ENCODE measurements at regions of chr12 and their contacts with region 1.

Region 1: DNA sequence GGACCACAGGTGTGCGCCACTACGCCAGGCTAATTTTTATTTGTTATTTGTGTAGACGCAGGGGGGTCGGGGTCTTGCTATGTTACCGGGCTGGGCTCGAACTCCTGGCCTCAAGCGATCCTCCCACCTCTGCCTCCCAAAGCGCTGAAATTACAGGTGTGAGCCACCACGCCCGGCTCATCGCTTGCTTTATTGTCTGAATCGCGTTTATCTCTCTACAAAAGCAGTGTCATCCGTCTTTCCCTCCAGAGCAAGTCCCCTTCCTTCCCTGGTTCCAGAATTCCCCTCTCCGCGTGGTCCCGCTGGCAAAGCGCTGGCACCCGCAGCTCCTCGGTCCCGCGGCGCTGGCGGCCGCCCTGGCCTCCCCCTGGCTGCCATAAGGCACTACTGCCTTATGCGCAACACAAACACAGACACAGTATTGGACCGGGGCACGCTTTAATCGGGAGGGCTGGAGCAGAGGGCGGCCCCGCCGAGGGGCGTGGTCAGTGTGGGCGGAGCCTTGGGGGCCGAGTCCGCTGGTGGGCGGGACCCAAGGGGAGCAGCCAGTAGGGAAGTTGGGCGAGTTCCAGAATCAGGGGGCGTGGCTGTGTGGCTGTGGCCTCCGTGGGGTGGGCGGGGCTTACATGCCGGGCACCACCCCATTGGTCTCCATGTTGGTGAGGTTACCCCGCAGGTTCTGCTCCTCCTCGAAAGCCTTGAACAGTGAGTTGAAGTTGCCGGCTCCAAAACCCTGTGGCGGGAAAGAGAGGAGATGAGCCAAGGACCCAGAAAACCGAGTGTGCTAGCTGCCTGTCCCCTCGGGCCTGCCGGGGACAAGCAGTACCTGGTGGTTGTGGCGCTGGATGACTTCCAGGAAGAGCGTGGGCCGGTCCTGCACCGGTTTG is 19.3 kb downstream of the HPD start:
- DNase-seq: peak; percentile 98 to 100 (median 99)
- ATAC-seq: peak; percentile 100
- H3K4me3 ChIP-seq: peak overlapping the region; percentile 91
- H3K4me3 Mint-ChIP-seq: peak overlapping the region; percentile 96 to 100 (median 98)
- H3K27ac ChIP-seq: peak overlapping the region; percentile 58
- H3K27ac Mint-ChIP-seq: peak overlapping the region; percentile 87 to 96 (median 92)
- H3K4me1 ChIP-seq: peaks cover 8 to 13% of the 10 kb centered on the region in 2 donors
- H3K4me1 Mint-ChIP-seq: peaks cover 12 to 27% (median 18%) of the 10 kb centered on the region in 7 donors
- H3K27me3 ChIP-seq: no peaks in the 10 kb centered on the region
- H3K27me3 Mint-ChIP-seq: no peaks in the 10 kb centered on the region

Region 2: DNA sequence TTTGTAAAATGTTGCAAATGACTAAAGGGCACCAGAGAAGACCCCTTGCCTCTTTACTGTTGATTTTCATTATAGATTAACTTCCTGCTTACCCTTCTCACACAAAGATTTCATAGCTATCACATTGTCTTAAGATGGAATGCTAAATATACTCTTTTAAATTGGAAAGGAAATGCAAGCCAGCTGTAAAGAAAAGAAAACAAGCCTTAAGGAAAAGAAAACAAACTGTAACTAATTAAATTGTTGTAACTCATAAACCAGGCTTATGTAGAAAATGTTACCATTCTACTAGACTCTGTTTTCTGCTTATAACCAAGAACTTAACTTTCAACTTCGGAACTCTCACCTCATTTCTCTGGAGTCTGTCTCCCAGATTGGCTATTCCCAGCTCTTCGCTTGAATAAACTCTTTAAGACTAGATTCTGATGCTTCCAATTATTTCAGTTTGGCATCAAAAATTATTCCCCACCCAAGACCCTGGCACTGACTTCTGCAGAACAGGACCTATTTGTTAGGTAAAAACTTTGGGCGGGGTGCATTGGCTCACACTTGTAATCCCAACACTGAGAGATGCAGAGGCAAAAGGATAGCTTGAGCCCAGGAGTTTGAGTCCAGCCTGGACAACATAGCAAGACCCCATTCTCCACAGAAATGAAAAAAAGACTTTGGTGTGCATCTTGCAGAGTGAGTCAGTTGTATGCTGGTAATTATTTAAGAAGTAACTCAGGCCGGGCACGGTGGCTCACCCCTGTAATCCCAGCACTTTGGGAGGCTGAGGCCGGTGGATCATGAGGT is 1925.6 kb before region 1 on chr12:
- CTCF ChIA-PET with region 1: no interaction called
- POLR2A ChIA-PET with region 1: no interaction called
- intact Hi-C with region 1: no loop called
- DNase-seq: no peak
- ATAC-seq: no peak
- H3K4me3 ChIP-seq: no peak overlapping the region
- H3K4me3 Mint-ChIP-seq: no peak overlapping the region
- H3K27ac ChIP-seq: no peak overlapping the region
- H3K27ac Mint-ChIP-seq: no peak overlapping the region
- H3K4me1 ChIP-seq: no peaks in the 10 kb centered on the region
- H3K4me1 Mint-ChIP-seq: no peaks in the 10 kb centered on the region
- H3K27me3 ChIP-seq: no peaks in the 10 kb centered on the region
- H3K27me3 Mint-ChIP-seq: peaks cover 0 to 13% (median 0%) of the 10 kb centered on the region in 5 donors

Region 3: DNA sequence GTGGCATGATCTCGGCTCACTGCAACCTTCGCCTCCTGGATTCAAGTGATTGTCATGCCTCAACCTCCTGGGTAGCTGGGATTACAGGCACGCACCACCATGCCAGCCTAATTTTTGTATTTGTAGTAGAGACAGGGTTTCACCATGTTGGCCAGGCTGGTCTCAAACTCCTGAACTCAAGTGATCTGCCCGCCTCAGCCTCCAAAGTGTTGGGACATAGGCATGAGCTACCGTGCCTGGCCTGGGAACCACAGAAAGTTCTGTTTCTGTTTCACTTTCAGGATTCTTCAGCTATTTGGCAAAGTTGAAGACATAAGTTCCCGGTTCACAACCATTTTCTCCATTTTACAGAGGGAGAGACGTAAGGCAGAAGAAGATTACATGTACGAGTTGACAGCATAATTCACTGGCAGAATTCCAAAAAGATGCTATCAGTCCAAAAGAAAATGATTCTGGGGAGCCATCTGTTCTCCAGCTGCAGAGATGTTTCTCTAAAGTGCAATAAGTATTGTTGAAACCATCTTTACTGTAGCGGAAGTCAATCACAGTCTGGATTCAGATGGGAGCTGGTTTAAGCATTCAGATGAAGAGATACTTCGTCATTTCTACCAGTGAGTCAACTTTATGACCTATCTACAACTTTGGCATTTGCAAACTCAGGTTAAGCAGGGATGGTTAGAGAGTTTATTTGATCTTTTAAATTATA is 447.6 kb before region 1 on chr12:
- CTCF ChIA-PET with region 1: no interaction called
- POLR2A ChIA-PET with region 1: no interaction called
- intact Hi-C with region 1: no loop called
- DNase-seq: peak in 4 of 9 donors; percentile 12 to 31 (median 16)
- ATAC-seq: peak; percentile 57
- H3K4me3 ChIP-seq: no peak overlapping the region
- H3K4me3 Mint-ChIP-seq: peak overlapping the region; percentile 8 to 78 (median 64)
- H3K27ac ChIP-seq: peak overlapping the region; percentile 3
- H3K27ac Mint-ChIP-seq: peak overlapping the region in 7 of 9 donors; percentile 30 to 79 (median 60)
- H3K4me1 ChIP-seq: peaks cover 0 to 7% of the 10 kb centered on the region in 2 donors
- H3K4me1 Mint-ChIP-seq: peaks cover 0 to 17% (median 9%) of the 10 kb centered on the region in 7 donors
- H3K27me3 ChIP-seq: no peaks in the 10 kb centered on the region
- H3K27me3 Mint-ChIP-seq: no peaks in the 10 kb centered on the region

Region 4: GRCh38 chr12:121688966-121689365 is 150.4 kb before region 1 on chr12:
- CTCF ChIA-PET with region 1: no interaction called
- POLR2A ChIA-PET with region 1: no interaction called
- intact Hi-C with region 1: loop called in 1 of 2 experiments (anchors 1 kb)
- DNase-seq: no peak
- ATAC-seq: no peak
- H3K4me3 ChIP-seq: no peak overlapping the region
- H3K4me3 Mint-ChIP-seq: no peak overlapping the region
- H3K27ac ChIP-seq: no peak overlapping the region
- H3K27ac Mint-ChIP-seq: peak overlapping the region in 6 of 9 donors; percentile 8 to 36 (median 22)
- H3K4me1 ChIP-seq: peaks cover 0 to 4% of the 10 kb centered on the region in 2 donors
- H3K4me1 Mint-ChIP-seq: peaks cover 0 to 16% (median 10%) of the 10 kb centered on the region in 7 donors
- H3K27me3 ChIP-seq: no peaks in the 10 kb centered on the region
- H3K27me3 Mint-ChIP-seq: peaks cover 0 to 6% (median 0%) of the 10 kb centered on the region in 5 donors

Region 5: DNA sequence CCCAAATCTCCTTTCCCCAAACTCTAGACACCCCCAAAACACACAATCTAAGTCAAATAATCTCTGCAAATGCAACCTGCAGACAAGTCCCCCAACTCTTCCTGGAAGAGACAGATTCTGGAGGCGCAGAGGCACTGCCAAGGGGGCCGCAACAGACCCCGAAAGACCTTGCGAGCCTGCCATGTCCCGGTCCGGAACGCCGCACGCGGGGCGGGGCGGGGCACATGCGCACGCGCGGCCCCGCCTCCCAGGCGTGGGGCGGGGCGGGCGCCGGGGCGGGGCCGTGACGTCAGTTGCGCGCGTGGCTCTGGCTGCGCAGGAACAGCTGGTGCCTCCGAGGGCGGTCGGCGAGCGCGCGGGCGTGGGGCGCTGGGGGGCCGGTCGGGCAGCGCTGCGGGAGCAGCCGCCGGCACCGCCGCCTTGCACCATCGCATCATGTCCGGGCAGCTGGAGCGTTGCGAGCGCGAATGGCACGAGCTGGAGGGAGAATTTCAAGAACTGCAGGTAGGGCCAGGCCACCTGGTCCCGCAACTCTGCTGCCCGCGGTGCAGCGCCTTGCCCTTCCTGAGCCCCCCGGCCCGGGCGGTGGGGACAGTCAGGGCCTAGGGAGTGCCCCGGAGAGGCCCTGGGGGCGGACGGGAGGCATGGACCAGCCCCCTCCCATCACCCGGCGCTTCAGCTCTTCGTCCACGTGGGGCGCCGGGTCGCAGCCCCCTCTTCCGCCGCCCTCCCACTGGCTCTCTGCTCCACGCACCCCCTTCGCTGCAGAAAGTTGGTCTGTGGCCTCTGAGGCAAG is 126.7 kb before region 1 on chr12 and contains the start of gene TMEM120B:
- CTCF ChIA-PET with region 1: no interaction called
- POLR2A ChIA-PET with region 1: interaction called, 9 read pairs
- intact Hi-C with region 1: loop called (anchors 1 kb)
- DNase-seq: peak; percentile 75 to 91 (median 86)
- ATAC-seq: peak; percentile 97
- H3K4me3 ChIP-seq: peak within 1 kb of the TSS; percentile 99
- H3K4me3 Mint-ChIP-seq: peak within 1 kb of the TSS; percentile 84 to 97 (median 94)
- H3K27ac ChIP-seq: peak within 1 kb of the TSS; percentile 82
- H3K27ac Mint-ChIP-seq: peak within 1 kb of the TSS; percentile 86 to 96 (median 92)
- H3K4me1 ChIP-seq: peaks cover 11 to 12% of the 10 kb centered on the region in 2 donors
- H3K4me1 Mint-ChIP-seq: peaks cover 7 to 37% (median 26%) of the 10 kb centered on the region in 7 donors
- H3K27me3 ChIP-seq: no peaks in the 10 kb centered on the region
- H3K27me3 Mint-ChIP-seq: no peaks in the 10 kb centered on the region
- total RNA-seq, gene TMEM120B: 7.3 to 14.3 (median 9.2) TPM

Region 6: GRCh38 chr12:121811434-121812319 is 27.7 kb before region 1 on chr12:
- CTCF ChIA-PET with region 1: interaction called, 4 read pairs
- POLR2A ChIA-PET with region 1: interaction called, 3 read pairs
- intact Hi-C with region 1: loop called in 1 of 2 experiments (anchors 2 kb)
- DNase-seq: peak in 8 of 9 donors; percentile 55 to 86 (median 75)
- ATAC-seq: peak; percentile 92
- H3K4me3 ChIP-seq: peak overlapping the region; percentile 74
- H3K4me3 Mint-ChIP-seq: peak overlapping the region; percentile 75 to 92 (median 84)
- H3K27ac ChIP-seq: peak overlapping the region; percentile 63
- H3K27ac Mint-ChIP-seq: peak overlapping the region; percentile 23 to 92 (median 75)
- H3K4me1 ChIP-seq: peaks cover 38 to 48% of the 10 kb centered on the region in 2 donors
- H3K4me1 Mint-ChIP-seq: peaks cover 29 to 69% (median 47%) of the 10 kb centered on the region in 7 donors
- H3K27me3 ChIP-seq: no peaks in the 10 kb centered on the region
- H3K27me3 Mint-ChIP-seq: no peaks in the 10 kb centered on the region

Region 7: GRCh38 chr12:121917979-121918678 is 78.8 kb after region 1 on chr12 and contains the start of gene CFAP251:
- CTCF ChIA-PET with region 1: no interaction called
- POLR2A ChIA-PET with region 1: no interaction called
- intact Hi-C with region 1: loop called (anchors 1 kb)
- DNase-seq: peak; percentile 88 to 98 (median 94)
- ATAC-seq: peak; percentile 99
- H3K4me3 ChIP-seq: peak within 1 kb of the TSS; percentile 58
- H3K4me3 Mint-ChIP-seq: peak within 1 kb of the TSS; percentile 68 to 94 (median 86)
- H3K27ac ChIP-seq: peak within 1 kb of the TSS; percentile 71
- H3K27ac Mint-ChIP-seq: peak within 1 kb of the TSS; percentile 91 to 98 (median 93)
- H3K4me1 ChIP-seq: peaks cover 4 to 10% of the 10 kb centered on the region in 2 donors
- H3K4me1 Mint-ChIP-seq: peaks cover 8 to 19% (median 13%) of the 10 kb centered on the region in 7 donors
- H3K27me3 ChIP-seq: no peaks in the 10 kb centered on the region
- H3K27me3 Mint-ChIP-seq: no peaks in the 10 kb centered on the region
- total RNA-seq, gene CFAP251: 0.38 to 1.5 (median 0.88) TPM

Region 8: DNA sequence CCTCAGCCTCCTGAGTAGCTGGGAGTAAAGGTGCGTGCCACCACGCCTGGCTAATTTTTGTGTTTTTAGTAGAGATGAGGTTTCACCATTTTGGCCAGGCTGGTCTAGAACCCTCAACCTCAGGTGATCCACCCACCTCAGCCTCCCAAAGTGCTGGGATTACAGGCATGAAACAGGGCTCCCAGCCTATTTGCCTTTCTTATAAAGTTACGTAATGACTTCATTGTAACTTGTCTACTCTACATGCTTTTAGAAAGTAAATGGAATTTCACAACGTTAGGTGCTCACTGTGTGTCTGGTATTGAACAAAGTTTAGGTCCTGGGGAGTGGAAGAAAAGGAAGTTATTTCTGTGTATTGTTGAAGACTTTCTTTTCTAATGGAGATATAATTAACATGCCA is 91.5 kb after region 1 on chr12:
- CTCF ChIA-PET with region 1: no interaction called
- POLR2A ChIA-PET with region 1: no interaction called
- intact Hi-C with region 1: no loop called
- DNase-seq: no peak
- ATAC-seq: no peak
- H3K4me3 ChIP-seq: no peak overlapping the region
- H3K4me3 Mint-ChIP-seq: no peak overlapping the region
- H3K27ac ChIP-seq: no peak overlapping the region
- H3K27ac Mint-ChIP-seq: no peak overlapping the region
- H3K4me1 ChIP-seq: no peaks in the 10 kb centered on the region
- H3K4me1 Mint-ChIP-seq: peaks cover 0 to 6% (median 0%) of the 10 kb centered on the region in 7 donors
- H3K27me3 ChIP-seq: no peaks in the 10 kb centered on the region
- H3K27me3 Mint-ChIP-seq: peaks cover 0 to 5% (median 0%) of the 10 kb centered on the region in 5 donors

Region 9: GRCh38 chr12:122471324-122472226 is 632.2 kb after region 1 on chr12:
- CTCF ChIA-PET with region 1: no interaction called
- POLR2A ChIA-PET with region 1: no interaction called
- intact Hi-C with region 1: no loop called
- DNase-seq: peak in 7 of 9 donors; percentile 26 to 68 (median 64)
- ATAC-seq: peak; percentile 86
- H3K4me3 ChIP-seq: no peak overlapping the region
- H3K4me3 Mint-ChIP-seq: no peak overlapping the region
- H3K27ac ChIP-seq: no peak overlapping the region
- H3K27ac Mint-ChIP-seq: peak overlapping the region in 8 of 9 donors; percentile 5 to 77 (median 46)
- H3K4me1 ChIP-seq: no peaks in the 10 kb centered on the region
- H3K4me1 Mint-ChIP-seq: peaks cover 1 to 23% (median 8%) of the 10 kb centered on the region in 7 donors
- H3K27me3 ChIP-seq: no peaks in the 10 kb centered on the region
- H3K27me3 Mint-ChIP-seq: no peaks in the 10 kb centered on the region

Measured in naive thymus-derived CD4-positive, alpha-beta T cell (primary cell).